ENCODE measurements at regions of chr13 and their contacts with region 1.

Region 1: GRCh38 chr13:76048675-76049375 is 412.7 kb downstream of the LMO7 start:
- DNase-seq: no peak
- ATAC-seq: no peak
- H3K4me3 ChIP-seq: no peak overlapping the region
- H3K27ac ChIP-seq: no peak overlapping the region
- H3K4me1 ChIP-seq: no peaks in the 10 kb centered on the region
- H3K27me3 ChIP-seq: no peaks in the 10 kb centered on the region
- CTCF ChIP-seq: no peak

Region 2: GRCh38 chr13:76198568-76199163 is 149.8 kb after region 1 on chr13:
- CTCF ChIA-PET with region 1: no interaction called
- POLR2A ChIA-PET with region 1: interaction called, 11 read pairs
- in situ Hi-C with region 1: no loop called
- intact Hi-C with region 1: no loop called
- DNase-seq: no peak
- ATAC-seq: no peak
- H3K4me3 ChIP-seq: no peak overlapping the region
- H3K27ac ChIP-seq: no peak overlapping the region
- H3K4me1 ChIP-seq: no peaks in the 10 kb centered on the region
- H3K27me3 ChIP-seq: no peaks in the 10 kb centered on the region
- CTCF ChIP-seq: no peak

Measured in Panc1 (cell line).